CD8-positive, alpha-beta T cell (primary cell): ENCODE measurements at regions of chr4 and their contacts with region 1.

Region 1: GRCh38 chr4:152500800-152501434 is 35.0 kb downstream of the FBXW7 start:
- DNase-seq: peak in 7 of 9 experiments; percentile 19 to 90 (median 56)
- ATAC-seq: peak; percentile 80
- H3K4me3 ChIP-seq: no peak overlapping the region
- H3K4me3 Mint-ChIP-seq: no peak overlapping the region
- H3K27ac ChIP-seq: no peak overlapping the region
- H3K27ac Mint-ChIP-seq: no peak overlapping the region
- H3K4me1 ChIP-seq: peaks cover 3% of the 10 kb centered on the region
- H3K4me1 Mint-ChIP-seq: peaks cover 39% of the 10 kb centered on the region
- H3K27me3 ChIP-seq: no peaks in the 10 kb centered on the region
- H3K27me3 Mint-ChIP-seq: no peaks in the 10 kb centered on the region
- CTCF ChIP-seq: peak; percentile 64

Region 2: GRCh38 chr4:151540728-151541422 is 960.0 kb before region 1 on chr4:
- CTCF ChIA-PET with region 1: no interaction called
- POLR2A ChIA-PET with region 1: no interaction called
- intact Hi-C with region 1: no loop called
- DNase-seq: no peak
- ATAC-seq: no peak
- H3K4me3 ChIP-seq: no peak overlapping the region
- H3K4me3 Mint-ChIP-seq: no peak overlapping the region
- H3K27ac ChIP-seq: no peak overlapping the region
- H3K27ac Mint-ChIP-seq: no peak overlapping the region
- H3K4me1 ChIP-seq: no peaks in the 10 kb centered on the region
- H3K4me1 Mint-ChIP-seq: no peaks in the 10 kb centered on the region
- H3K27me3 ChIP-seq: no peaks in the 10 kb centered on the region
- H3K27me3 Mint-ChIP-seq: peaks cover 23% of the 10 kb centered on the region
- CTCF ChIP-seq: no peak

Region 3: DNA sequence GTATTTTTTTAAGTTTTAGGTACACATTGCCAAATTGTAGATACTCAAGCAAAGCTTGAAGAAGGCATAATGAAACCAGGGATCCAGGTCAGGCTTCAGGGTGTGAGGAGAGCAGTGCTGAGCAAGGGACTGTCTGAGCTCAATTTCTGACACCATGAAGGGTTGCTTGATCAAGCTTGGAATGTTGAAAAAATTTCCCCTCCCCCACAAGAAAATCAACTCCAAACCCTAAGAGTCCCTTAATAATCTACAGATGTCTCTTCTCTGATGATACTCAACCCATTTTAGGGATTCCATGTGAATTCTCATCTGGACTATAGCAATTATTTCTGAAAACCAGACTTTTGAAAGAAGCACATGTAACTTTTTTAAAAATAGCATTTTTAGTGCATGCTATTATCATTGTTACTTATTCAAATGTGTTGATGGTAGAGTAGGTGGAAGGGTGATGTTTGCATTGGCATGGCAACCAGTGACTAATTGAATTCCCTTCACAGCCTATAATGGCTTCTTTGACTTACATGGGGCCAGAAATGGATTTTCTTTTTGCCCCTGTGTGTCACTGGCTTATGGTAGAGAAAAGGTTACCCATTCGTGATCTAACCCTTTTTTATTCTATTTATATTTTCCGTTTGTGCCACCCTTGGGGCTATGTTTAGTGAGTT is 217.0 kb before region 1 on chr4:
- CTCF ChIA-PET with region 1: no interaction called
- POLR2A ChIA-PET with region 1: no interaction called
- intact Hi-C with region 1: no loop called
- DNase-seq: no peak
- ATAC-seq: no peak
- H3K4me3 ChIP-seq: no peak overlapping the region
- H3K4me3 Mint-ChIP-seq: no peak overlapping the region
- H3K27ac ChIP-seq: no peak overlapping the region
- H3K27ac Mint-ChIP-seq: no peak overlapping the region
- H3K4me1 ChIP-seq: peaks cover 11% of the 10 kb centered on the region
- H3K4me1 Mint-ChIP-seq: peaks cover 12% of the 10 kb centered on the region
- H3K27me3 ChIP-seq: no peaks in the 10 kb centered on the region
- H3K27me3 Mint-ChIP-seq: no peaks in the 10 kb centered on the region
- CTCF ChIP-seq: no peak

Region 4: GRCh38 chr4:152408514-152409327 is 92.2 kb before region 1 on chr4:
- CTCF ChIA-PET with region 1: interaction called, 4 read pairs
- POLR2A ChIA-PET with region 1: no interaction called
- intact Hi-C with region 1: loop called in 1 of 2 experiments (anchors 5 kb)
- DNase-seq: peak in 3 of 9 experiments; percentile 10 to 60 (median 49)
- ATAC-seq: peak; percentile 40
- H3K4me3 ChIP-seq: no peak overlapping the region
- H3K4me3 Mint-ChIP-seq: no peak overlapping the region
- H3K27ac ChIP-seq: no peak overlapping the region
- H3K27ac Mint-ChIP-seq: no peak overlapping the region
- H3K4me1 ChIP-seq: no peaks in the 10 kb centered on the region
- H3K4me1 Mint-ChIP-seq: peaks cover 13% of the 10 kb centered on the region
- H3K27me3 ChIP-seq: no peaks in the 10 kb centered on the region
- H3K27me3 Mint-ChIP-seq: no peaks in the 10 kb centered on the region
- CTCF ChIP-seq: peak; percentile 57

Region 5: DNA sequence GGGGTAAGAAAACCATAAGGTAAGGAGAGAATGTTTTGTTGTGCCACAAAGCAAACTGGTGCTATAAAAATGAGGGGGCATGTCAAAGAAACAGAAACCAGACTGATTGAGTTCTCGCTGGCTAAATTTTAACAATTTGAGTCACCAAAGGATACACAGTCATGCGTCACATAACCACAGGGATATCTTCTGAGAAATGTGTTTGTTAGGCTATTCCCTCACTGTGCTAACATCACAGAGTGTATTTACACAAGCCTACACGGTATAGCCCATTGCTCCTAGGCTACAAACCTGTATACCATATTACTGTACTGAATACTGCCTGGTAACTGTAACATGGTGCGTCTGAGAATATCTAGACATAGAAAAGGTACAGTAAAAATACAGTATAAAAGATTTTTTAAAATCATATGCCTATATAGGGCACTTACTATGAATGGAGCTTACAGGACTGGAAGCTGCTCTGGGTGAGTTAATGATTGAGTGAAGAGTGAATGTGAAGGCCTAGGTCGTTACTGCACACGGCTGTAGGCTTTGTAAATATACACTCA is 15.1 kb before region 1 on chr4:
- CTCF ChIA-PET with region 1: interaction called, 17 read pairs
- POLR2A ChIA-PET with region 1: no interaction called
- intact Hi-C with region 1: no loop called
- DNase-seq: peak in 5 of 9 experiments; percentile 8 to 80 (median 29)
- ATAC-seq: peak; percentile 97
- H3K4me3 ChIP-seq: no peak overlapping the region
- H3K4me3 Mint-ChIP-seq: no peak overlapping the region
- H3K27ac ChIP-seq: no peak overlapping the region
- H3K27ac Mint-ChIP-seq: peak overlapping the region; percentile 35
- H3K4me1 ChIP-seq: peaks cover 13% of the 10 kb centered on the region
- H3K4me1 Mint-ChIP-seq: peaks cover 44% of the 10 kb centered on the region
- H3K27me3 ChIP-seq: no peaks in the 10 kb centered on the region
- H3K27me3 Mint-ChIP-seq: no peaks in the 10 kb centered on the region
- CTCF ChIP-seq: no peak

Region 6: DNA sequence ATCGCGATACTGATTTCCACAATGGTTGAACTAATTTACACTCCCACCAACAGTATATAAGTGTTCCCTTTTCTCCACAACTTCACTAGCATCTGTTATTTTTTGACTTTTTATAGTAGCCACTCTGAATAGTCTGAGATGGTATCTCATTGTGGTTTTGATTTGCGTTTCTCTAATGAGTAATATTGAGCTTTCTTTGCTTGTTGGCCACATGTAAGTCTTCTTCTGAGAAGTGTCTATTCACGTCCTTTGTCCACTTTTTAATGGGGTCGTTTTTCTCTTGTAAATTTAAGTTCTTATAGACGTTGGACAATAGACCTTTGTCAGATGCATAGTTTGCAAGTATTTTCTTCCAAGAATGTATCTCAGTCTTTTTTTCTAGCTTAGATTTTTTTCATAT is 25.0 kb after region 1 on chr4:
- CTCF ChIA-PET with region 1: interaction called, 14 read pairs
- POLR2A ChIA-PET with region 1: interaction called, 3 read pairs
- intact Hi-C with region 1: no loop called
- DNase-seq: no peak
- ATAC-seq: no peak
- H3K4me3 ChIP-seq: no peak overlapping the region
- H3K4me3 Mint-ChIP-seq: no peak overlapping the region
- H3K27ac ChIP-seq: no peak overlapping the region
- H3K27ac Mint-ChIP-seq: no peak overlapping the region
- H3K4me1 ChIP-seq: peaks cover 12% of the 10 kb centered on the region
- H3K4me1 Mint-ChIP-seq: peaks cover 73% of the 10 kb centered on the region
- H3K27me3 ChIP-seq: no peaks in the 10 kb centered on the region
- H3K27me3 Mint-ChIP-seq: no peaks in the 10 kb centered on the region
- CTCF ChIP-seq: no peak

Region 7: DNA sequence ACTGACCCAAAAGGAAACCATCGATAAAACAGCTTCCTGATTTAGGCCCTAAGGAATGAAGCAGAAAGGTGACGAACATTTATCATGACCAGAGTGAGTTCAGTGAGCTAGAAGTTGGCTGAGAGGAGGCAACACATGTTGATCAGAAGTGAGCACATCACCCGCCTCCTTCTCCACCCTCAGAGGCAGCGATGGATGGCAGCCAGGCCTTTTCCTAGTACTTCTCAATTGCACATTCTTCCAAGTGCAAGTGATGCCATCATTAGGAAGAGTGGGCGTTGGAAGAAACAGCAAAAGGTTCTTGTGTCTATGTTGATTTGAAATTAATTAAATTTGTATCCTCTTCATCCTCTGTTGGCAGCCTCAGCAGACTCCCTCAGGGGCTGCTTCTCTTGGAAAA is 127.2 kb after region 1 on chr4:
- CTCF ChIA-PET with region 1: interaction called, 16 read pairs
- POLR2A ChIA-PET with region 1: no interaction called
- intact Hi-C with region 1: no loop called
- DNase-seq: no peak
- ATAC-seq: no peak
- H3K4me3 ChIP-seq: no peak overlapping the region
- H3K4me3 Mint-ChIP-seq: no peak overlapping the region
- H3K27ac ChIP-seq: no peak overlapping the region
- H3K27ac Mint-ChIP-seq: no peak overlapping the region
- H3K4me1 ChIP-seq: no peaks in the 10 kb centered on the region
- H3K4me1 Mint-ChIP-seq: no peaks in the 10 kb centered on the region
- H3K27me3 ChIP-seq: no peaks in the 10 kb centered on the region
- H3K27me3 Mint-ChIP-seq: no peaks in the 10 kb centered on the region
- CTCF ChIP-seq: no peak

Region 8: GRCh38 chr4:152735396-152735859 is 234.5 kb after region 1 on chr4:
- CTCF ChIA-PET with region 1: interaction called, 63 read pairs
- POLR2A ChIA-PET with region 1: no interaction called
- intact Hi-C with region 1: loop called (anchors 1 kb)
- DNase-seq: peak in 2 of 9 experiments; percentile 32 to 45
- ATAC-seq: peak; percentile 38
- H3K4me3 ChIP-seq: no peak overlapping the region
- H3K4me3 Mint-ChIP-seq: no peak overlapping the region
- H3K27ac ChIP-seq: no peak overlapping the region
- H3K27ac Mint-ChIP-seq: no peak overlapping the region
- H3K4me1 ChIP-seq: no peaks in the 10 kb centered on the region
- H3K4me1 Mint-ChIP-seq: no peaks in the 10 kb centered on the region
- H3K27me3 ChIP-seq: no peaks in the 10 kb centered on the region
- H3K27me3 Mint-ChIP-seq: no peaks in the 10 kb centered on the region
- CTCF ChIP-seq: peak; percentile 10